Mammary epithelial cell (primary cell): ENCODE measurements at regions of chr2 and their contacts with region 1.

Region 1: GRCh38 chr2:86079981-86080911 is 25.4 kb downstream of the POLR1A start:
- DNase-seq: peak; percentile 30
- H3K4me3 ChIP-seq: no peak overlapping the region
- H3K27ac ChIP-seq: no peak overlapping the region
- H3K4me1 ChIP-seq: no peaks in the 10 kb centered on the region
- H3K27me3 ChIP-seq: no peaks in the 10 kb centered on the region
- CTCF ChIP-seq: peak; percentile 70 to 89

Region 2: GRCh38 chr2:86035883-86036668 is 44.2 kb before region 1 on chr2:
- CTCF ChIA-PET with region 1: no interaction called
- dilution Hi-C with region 1: loop called (anchors 5 kb)
- in situ Hi-C with region 1: no loop called
- intact Hi-C with region 1: no loop called
- DNase-seq: peak; percentile 20
- H3K4me3 ChIP-seq: no peak overlapping the region
- H3K27ac ChIP-seq: no peak overlapping the region
- H3K4me1 ChIP-seq: peaks cover 27% of the 10 kb centered on the region
- H3K27me3 ChIP-seq: no peaks in the 10 kb centered on the region
- CTCF ChIP-seq: peak; percentile 9 to 21